HEK293 (cell line): ENCODE measurements at regions of chr17 and their contacts with region 1.

Region 1: DNA sequence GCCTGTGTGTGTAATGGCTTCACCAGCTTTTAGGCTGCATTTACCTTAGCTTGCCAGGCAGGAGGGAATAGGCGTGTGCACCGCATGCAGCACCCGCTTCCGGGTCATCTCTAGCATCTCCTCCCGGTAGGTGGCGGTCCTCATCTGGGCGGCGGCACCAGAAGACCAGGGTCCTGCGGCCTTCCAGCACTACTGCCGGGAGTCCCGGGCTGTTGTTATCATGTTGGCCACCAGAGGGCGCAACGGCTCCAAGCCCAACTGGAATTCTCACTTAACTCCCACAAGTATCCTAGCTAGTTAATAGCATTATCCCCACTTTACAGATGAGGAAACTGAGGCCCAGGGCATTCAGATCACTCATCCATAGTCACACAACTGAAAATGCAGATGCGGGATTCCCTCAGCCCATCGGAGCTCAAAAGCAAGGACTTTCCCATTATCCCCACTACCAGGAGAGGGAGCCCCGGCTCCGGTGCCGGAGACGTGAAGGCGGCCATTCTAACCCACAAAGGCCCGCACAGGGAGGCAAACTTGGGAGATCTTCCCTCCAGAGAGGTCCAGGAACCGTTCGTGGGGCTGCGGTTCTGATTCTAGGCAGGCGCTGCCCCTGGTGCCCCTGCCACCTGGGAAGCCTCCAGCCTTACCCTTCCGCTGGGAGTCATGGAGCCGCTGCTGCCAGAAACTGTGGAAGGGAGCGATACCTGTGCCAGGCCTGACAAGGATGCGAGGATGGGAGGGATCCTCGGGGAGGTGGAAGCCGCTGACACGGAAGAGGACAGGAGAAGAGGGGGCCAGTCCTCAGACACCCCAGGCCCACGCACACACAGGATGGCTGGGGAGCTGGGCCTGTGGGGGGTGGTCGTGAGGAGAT is 23.9 kb downstream of the LGALS9 start:
- H3K4me3 ChIP-seq: no peak overlapping the region
- H3K27ac ChIP-seq: no peak overlapping the region
- H3K4me1 ChIP-seq: no peaks in the 10 kb centered on the region
- CTCF ChIP-seq: peak; percentile 96

Region 2: GRCh38 chr17:27622986-27623385 is 31.9 kb before region 1 on chr17:
- CTCF ChIA-PET with region 1: interaction called, 267 read pairs
- POLR2A ChIA-PET with region 1: no interaction called
- H3K4me3 ChIP-seq: no peak overlapping the region
- H3K27ac ChIP-seq: no peak overlapping the region
- H3K4me1 ChIP-seq: no peaks in the 10 kb centered on the region
- CTCF ChIP-seq: no peak

Region 3: GRCh38 chr17:27666831-27667560 is 12.1 kb after region 1 on chr17:
- CTCF ChIA-PET with region 1: interaction called, 44 read pairs
- POLR2A ChIA-PET with region 1: no interaction called
- H3K4me3 ChIP-seq: no peak overlapping the region
- H3K27ac ChIP-seq: no peak overlapping the region
- H3K4me1 ChIP-seq: no peaks in the 10 kb centered on the region
- CTCF ChIP-seq: no peak

Region 4: DNA sequence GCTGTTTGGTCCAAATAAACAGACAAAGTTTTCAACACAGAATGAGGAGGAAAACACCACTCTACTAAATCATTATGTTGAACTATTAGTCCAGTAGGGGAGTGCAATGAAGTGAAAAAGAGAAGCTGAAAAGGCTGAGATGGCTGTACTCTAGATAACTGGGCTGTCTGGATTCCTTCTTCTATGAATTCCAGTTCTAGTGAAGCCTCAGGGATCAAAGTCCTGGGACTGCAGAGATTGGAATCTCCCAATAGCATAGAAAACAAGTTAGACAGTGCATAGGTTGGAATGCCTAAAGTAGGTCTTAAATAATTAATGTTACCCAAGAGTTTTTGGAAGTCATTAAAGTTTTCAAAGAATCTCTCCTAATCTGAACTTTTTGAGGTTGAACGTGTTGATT is 36.0 kb after region 1 on chr17:
- CTCF ChIA-PET with region 1: interaction called, 10 read pairs
- POLR2A ChIA-PET with region 1: no interaction called
- H3K4me3 ChIP-seq: no peak overlapping the region
- H3K27ac ChIP-seq: no peak overlapping the region
- H3K4me1 ChIP-seq: peaks cover 35% of the 10 kb centered on the region
- CTCF ChIP-seq: no peak

Region 5: DNA sequence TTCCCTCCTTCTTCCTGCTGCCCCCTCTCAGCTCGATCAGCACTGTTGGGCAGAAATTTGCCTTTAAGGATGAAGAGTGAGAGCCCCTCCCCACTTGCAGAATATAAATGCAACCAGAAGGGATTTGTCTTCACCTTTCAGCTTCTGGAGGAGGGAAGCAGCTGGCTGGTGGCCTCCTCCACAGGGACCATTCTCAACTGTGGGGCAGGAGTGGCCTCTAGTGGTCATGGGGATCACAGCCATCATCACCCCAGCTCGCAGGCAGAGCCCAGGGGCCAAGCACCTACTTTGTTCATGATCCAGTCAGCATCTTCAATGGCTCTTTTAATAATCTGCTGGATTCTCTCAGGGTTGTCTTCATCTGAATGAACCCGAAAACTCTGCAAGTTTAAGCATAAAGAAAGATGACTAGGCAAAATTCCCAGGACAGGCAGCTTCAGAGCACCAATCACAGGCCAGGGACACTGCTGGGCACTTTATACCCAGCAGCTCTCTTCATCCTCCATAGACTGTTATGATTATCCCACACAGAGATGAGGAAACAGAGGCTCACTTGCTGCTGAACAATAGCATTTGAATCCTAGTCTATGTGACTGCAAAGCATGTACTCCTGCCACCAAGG is 225.2 kb after region 1 on chr17:
- CTCF ChIA-PET with region 1: interaction called, 46 read pairs
- POLR2A ChIA-PET with region 1: no interaction called
- H3K4me3 ChIP-seq: no peak overlapping the region
- H3K27ac ChIP-seq: no peak overlapping the region
- H3K4me1 ChIP-seq: no peaks in the 10 kb centered on the region
- CTCF ChIP-seq: peak; percentile 73